MCF 10A (cell line): ENCODE measurements at regions of chr19 and their contacts with region 1.

Region 1: GRCh38 chr19:47243776-47244547 is 12.4 kb upstream of the CCDC9 start:
- DNase-seq: peak; percentile 94
- H3K4me3 Mint-ChIP-seq: no peak overlapping the region
- H3K27ac Mint-ChIP-seq: no peak overlapping the region
- H3K4me1 Mint-ChIP-seq: peaks cover 5% of the 10 kb centered on the region
- H3K27me3 Mint-ChIP-seq: no peaks in the 10 kb centered on the region
- CTCF ChIP-seq: peak; percentile 95

Region 2: DNA sequence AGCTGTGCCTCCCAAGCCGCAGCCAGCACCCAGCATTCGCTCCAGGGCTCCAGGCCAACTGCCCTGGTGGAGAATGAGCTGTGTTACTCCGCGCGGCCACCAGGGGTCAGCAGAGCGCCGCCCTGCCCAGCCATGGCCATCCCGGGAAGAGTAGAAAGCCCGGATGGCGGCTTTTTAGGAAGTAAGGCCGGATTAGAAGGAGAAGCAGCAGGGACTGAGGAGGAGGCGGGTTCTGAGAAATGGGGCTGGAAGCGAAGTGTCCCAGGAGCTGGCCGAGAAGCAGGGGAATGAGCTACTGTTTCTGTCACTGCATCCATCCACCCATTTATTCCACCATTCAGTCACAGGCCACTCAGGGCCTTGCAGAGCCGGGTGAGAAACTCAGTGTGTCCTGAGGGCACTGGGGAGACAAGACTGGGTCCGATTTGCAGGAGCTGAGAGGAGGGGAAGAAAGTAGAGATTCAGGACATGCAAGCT is 230.9 kb before region 1 on chr19:
- CTCF ChIA-PET with region 1: no interaction called
- POLR2A ChIA-PET with region 1: interaction called, 9 read pairs
- intact Hi-C with region 1: loop called (anchors 10 kb)
- DNase-seq: peak; percentile 87
- H3K4me3 Mint-ChIP-seq: peak overlapping the region; percentile 45
- H3K27ac Mint-ChIP-seq: no peak overlapping the region
- H3K4me1 Mint-ChIP-seq: peaks cover 12% of the 10 kb centered on the region
- H3K27me3 Mint-ChIP-seq: no peaks in the 10 kb centered on the region
- CTCF ChIP-seq: peak; percentile 93

Region 3: DNA sequence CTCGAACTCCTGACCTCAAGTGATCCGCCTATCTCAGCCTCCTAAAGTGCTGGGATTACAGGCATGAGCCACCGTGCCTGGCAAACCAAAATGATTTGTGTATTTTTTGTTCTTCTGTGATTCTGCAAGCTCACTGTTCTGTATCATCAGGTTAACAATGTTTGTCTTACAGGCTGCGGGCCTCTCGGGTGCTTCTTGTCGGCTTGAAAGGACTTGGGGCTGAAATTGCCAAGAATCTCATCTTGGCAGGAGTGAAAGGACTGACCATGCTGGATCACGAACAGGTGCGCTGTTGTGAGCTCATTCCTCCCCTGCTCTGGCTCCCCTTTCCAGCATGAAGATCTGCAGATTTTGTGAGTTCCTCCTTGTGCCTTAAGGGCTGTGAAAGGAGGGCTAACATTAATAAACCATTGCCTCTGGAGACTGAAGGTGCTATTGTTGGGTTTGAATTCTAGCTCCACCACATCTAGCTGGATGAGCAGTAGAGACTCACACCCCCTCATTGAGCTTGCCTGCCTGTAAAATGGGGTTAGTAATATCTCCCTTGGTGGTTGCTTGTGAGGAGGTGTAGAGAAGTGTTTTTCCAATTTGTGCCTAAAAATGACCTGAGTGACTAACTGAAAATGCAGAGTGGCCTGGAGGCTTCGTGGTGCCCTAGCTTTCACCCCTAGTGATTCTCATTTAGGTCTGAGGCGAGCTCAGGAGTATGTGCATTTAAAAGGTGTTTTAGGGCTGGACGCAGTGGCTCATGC is 100.5 kb before region 1 on chr19:
- CTCF ChIA-PET with region 1: interaction called, 62 read pairs
- POLR2A ChIA-PET with region 1: no interaction called
- intact Hi-C with region 1: no loop called
- DNase-seq: no peak
- H3K4me3 Mint-ChIP-seq: no peak overlapping the region
- H3K27ac Mint-ChIP-seq: peak overlapping the region; percentile 12
- H3K4me1 Mint-ChIP-seq: peaks cover 16% of the 10 kb centered on the region
- H3K27me3 Mint-ChIP-seq: no peaks in the 10 kb centered on the region
- CTCF ChIP-seq: no peak

Region 4: DNA sequence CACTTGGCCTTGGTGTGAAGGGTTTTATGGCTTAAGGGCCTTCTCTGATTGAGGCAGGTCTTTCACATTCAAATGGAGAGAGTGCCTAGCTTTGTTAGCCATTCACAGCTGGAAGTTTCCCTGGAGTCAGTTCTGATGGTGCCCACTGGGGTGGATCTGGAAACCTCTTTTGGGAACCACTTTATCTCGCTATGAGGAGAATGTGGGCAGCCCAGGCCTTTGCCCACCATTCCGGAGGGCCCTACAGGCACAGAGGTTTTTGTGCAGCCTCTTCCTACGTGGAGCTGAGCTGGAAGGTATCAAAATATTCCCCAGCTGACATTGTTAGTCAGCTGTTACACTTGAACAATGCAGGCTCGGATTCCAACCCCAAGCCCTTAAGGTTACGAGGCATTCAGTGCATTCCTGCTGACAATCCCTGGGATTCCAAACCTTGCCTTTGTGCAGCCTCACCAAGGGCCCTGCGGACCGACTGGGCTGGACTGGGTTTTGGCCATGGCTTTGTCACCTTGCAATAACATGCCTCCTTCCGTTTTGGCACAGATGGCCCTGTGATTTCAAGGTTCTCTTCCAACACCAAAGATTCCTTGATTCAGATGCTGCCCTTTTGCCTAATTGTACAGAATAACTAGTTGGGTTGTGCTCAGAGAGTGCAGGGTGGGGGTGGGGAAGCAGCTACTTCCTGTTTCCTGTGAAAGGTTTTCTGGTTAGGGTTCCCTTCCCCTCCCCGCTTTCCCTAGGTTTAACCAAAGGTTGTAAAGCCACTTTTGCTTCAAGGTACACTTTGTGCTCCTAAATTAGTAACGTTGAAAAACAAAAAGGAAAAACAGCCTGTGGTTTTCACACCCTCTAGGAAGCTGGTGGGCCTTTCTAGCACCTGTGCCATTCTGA is 86.3 kb before region 1 on chr19:
- CTCF ChIA-PET with region 1: interaction called, 18 read pairs
- POLR2A ChIA-PET with region 1: interaction called, 6 read pairs
- intact Hi-C with region 1: no loop called
- DNase-seq: no peak
- H3K4me3 Mint-ChIP-seq: no peak overlapping the region
- H3K27ac Mint-ChIP-seq: peak overlapping the region; percentile 20
- H3K4me1 Mint-ChIP-seq: peaks cover 23% of the 10 kb centered on the region
- H3K27me3 Mint-ChIP-seq: no peaks in the 10 kb centered on the region
- CTCF ChIP-seq: no peak

Region 5: DNA sequence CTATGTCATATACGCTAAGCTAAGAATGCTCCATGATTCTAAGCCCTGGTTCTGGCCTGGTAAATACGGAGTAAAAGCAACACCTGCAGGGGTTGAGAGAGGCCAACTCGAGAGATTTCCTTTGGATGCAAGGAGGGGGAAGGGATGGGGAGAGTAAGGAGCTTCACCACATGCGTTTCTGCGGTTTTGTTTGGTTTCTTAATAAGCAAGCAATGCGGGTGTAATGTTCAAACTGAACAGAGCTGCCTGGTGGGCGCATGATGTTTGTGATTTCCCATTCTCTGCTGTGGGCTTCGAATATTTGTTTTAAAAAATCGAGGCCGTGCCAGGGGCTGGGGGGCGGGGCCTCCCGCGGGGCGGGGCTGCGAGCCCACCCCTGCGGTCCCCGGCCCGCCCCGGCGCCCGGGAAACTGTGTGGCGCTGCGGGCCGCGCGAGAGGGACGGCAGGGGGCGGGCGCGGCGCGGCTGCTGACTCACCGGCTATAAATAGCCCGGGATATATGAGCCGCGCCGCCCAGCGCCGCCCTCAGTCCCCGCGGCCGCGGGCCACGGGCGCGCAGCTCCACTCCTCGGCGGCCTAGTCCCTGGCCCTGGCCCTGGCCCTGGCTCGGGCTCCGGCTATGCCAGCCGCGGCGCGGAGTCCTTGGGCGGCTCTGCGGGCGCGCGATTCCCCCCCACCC is 18.1 kb before region 1 on chr19:
- CTCF ChIA-PET with region 1: interaction called, 52 read pairs
- POLR2A ChIA-PET with region 1: interaction called, 30 read pairs
- intact Hi-C with region 1: no loop called
- DNase-seq: peak; percentile 85
- H3K4me3 Mint-ChIP-seq: peak overlapping the region; percentile 45
- H3K27ac Mint-ChIP-seq: no peak overlapping the region
- H3K4me1 Mint-ChIP-seq: peaks cover 6% of the 10 kb centered on the region
- H3K27me3 Mint-ChIP-seq: no peaks in the 10 kb centered on the region
- CTCF ChIP-seq: peak; percentile 26

Region 6: GRCh38 chr19:47256688-47257443 is 12.9 kb after region 1 on chr19:
- CTCF ChIA-PET with region 1: interaction called, 17 read pairs
- POLR2A ChIA-PET with region 1: interaction called, 23 read pairs
- intact Hi-C with region 1: no loop called
- DNase-seq: peak; percentile 99
- H3K4me3 Mint-ChIP-seq: peak overlapping the region; percentile 97
- H3K27ac Mint-ChIP-seq: peak overlapping the region; percentile 99
- H3K4me1 Mint-ChIP-seq: peaks cover 26% of the 10 kb centered on the region
- H3K27me3 Mint-ChIP-seq: no peaks in the 10 kb centered on the region
- CTCF ChIP-seq: no peak

Region 7: DNA sequence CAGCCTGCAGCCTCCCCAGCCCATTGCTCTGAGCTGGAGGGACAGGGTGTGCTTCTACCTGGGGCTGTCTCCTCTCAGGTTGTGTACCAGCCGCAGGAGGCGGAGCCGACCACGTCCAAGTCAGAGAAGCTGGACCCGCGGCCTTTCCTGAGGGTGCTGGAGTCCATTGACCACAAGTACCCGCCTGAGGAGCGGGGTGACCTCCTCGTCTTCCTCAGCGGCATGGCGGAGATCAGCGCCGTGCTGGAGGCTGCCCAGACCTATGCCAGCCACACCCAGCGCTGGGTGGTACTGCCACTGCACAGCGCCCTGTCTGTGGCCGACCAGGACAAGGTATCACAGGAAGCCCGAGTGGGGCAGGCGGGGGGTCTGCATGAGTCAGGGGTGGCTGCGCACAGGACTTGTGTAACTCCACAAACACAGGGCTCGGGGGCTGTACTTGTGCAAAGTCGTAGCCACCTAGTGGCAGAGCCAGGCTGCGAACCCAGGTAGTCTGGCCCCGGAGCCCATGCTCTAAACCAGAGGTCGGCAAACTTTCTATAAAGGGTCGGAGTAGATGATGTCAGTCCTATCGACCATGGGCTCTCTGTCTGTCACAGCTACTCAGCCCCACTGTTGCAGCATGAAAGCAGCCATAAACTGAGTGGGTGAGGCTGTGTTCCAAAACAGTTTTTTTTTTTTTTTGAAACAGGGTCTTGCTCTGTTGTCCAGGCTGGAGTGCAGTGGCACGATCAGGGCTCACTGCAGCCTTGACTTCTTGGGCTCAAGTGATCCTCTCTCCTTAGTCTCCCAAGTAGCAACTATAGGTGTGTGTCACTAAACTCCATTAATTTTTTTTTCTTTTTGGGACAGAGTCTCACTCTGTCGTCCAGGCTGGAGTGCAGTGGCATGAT is 114.1 kb after region 1 on chr19:
- CTCF ChIA-PET with region 1: no interaction called
- POLR2A ChIA-PET with region 1: no interaction called
- intact Hi-C with region 1: no loop called
- DNase-seq: no peak
- H3K4me3 Mint-ChIP-seq: no peak overlapping the region
- H3K27ac Mint-ChIP-seq: no peak overlapping the region
- H3K4me1 Mint-ChIP-seq: no peaks in the 10 kb centered on the region
- H3K27me3 Mint-ChIP-seq: no peaks in the 10 kb centered on the region
- CTCF ChIP-seq: no peak

Region 8: DNA sequence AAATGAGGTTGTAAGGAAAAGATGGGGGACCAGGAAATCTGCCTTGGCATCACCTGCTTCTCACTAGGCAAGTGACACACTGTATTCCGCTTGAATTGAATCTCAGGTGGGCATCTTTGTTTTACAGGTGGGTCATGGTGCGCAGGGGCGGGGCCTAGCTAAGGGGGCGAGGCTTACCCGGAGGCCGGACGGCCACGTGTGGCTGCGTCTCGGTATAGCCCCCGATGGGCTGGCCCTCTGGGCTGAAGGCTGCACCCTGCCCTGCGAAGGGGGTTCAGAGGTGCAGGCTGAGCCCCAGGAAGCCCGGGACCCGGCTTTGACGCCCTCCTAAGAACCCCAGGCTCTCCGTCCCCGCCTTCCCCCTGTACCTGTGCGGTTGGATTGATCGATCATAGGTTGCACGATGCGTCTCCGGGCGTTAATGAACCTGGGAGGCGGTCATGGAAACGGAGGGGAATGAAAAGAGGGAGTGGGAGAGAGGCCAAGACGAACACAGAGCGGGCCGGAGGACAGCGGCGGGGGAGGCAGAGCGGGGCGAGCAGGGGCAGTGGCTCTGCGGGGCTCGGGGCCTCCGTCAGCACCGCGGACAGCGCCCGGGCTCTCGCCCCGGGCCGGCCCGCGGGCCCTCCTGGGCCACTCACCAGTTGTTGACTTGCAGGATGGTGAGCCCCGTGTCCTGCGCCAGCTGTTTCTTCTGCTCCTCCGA is 162.9 kb after region 1 on chr19:
- CTCF ChIA-PET with region 1: no interaction called
- POLR2A ChIA-PET with region 1: no interaction called
- intact Hi-C with region 1: no loop called
- DNase-seq: no peak
- H3K4me3 Mint-ChIP-seq: no peak overlapping the region
- H3K27ac Mint-ChIP-seq: no peak overlapping the region
- H3K4me1 Mint-ChIP-seq: no peaks in the 10 kb centered on the region
- H3K27me3 Mint-ChIP-seq: peaks cover 47% of the 10 kb centered on the region
- CTCF ChIP-seq: no peak